ENCODE measurements at regions of chr18 and their contacts with region 1.

Region 1: DNA sequence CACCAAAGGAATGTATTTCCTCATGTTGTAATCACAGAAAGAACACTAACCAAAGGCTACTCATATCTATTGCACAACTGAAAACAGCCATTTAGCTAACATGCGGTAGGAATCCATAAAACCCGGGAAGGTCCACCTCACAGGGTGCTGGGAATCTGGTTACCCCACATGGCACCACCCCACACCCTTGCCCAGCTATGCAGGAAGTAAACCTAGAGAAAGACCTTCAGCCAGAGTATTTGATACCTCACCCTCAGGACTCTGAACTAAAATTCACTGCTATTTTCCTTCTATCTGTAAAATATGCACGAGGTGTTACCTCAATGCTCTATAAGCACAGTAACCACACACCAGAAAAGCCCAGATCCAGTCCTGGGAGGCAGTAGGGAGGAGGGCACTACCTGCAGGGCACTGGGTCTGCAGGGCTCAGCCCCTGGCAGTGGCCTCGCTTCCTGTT is 45.8 kb downstream of the PTPN2 start:
- DNase-seq: peak in 1 of 9 donors; percentile 28
- ATAC-seq: no peak
- H3K4me3 ChIP-seq: peak overlapping the region; percentile 15
- H3K4me3 Mint-ChIP-seq: peak overlapping the region; percentile 26 to 86 (median 54)
- H3K27ac ChIP-seq: no peak overlapping the region
- H3K27ac Mint-ChIP-seq: peak overlapping the region; percentile 28 to 98 (median 57)
- H3K4me1 ChIP-seq: peaks cover 31 to 34% of the 10 kb centered on the region in 2 donors
- H3K4me1 Mint-ChIP-seq: peaks cover 31 to 67% (median 57%) of the 10 kb centered on the region in 7 donors
- H3K27me3 ChIP-seq: no peaks in the 10 kb centered on the region
- H3K27me3 Mint-ChIP-seq: no peaks in the 10 kb centered on the region

Region 2: DNA sequence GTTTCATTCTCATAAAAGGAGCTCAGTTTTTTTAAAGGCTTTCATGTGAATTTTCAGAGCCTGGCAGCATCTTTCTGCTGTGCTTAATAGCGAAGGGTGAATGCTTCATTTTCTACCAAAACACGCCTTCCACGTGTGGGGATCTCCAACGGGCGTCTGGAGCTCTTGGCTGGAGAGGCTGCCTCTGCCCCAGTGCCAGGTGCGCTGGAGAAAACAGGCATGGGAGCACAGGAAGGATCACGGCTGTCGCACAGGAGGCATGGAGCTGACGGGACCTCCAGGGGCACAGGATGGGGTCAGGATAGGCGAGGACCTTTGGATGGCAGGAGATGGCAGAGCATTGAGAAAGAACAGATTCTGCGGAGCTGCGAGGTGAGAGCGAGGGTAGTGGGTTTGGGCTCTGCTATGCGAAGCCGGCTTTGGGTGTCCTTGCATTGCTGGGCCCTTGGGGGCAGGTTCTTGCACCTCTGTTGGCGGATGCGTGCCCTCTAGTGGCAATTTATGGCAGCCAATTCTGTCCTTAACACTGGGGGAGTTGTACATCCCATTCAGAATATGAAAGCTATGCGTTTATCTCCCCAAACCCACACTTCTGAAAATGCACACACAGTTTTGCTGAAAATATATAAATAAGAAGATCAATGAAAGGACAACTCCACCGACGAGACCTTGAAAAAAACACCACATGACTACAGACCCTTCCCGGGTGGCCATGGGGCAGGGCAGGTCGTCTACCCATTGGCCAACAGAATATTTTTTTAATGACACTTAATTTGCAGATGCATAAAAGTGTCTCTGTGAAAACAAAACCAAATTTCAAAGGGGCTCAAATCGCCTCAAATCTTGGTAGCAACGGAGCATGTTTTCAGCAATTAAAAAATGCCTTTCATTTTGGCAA is 1319.2 kb before region 1 on chr18:
- CTCF ChIA-PET with region 1: no interaction called
- POLR2A ChIA-PET with region 1: no interaction called
- intact Hi-C with region 1: no loop called
- DNase-seq: peak in 2 of 9 donors; percentile 11 to 27
- ATAC-seq: no peak
- H3K4me3 ChIP-seq: no peak overlapping the region
- H3K4me3 Mint-ChIP-seq: no peak overlapping the region
- H3K27ac ChIP-seq: no peak overlapping the region
- H3K27ac Mint-ChIP-seq: no peak overlapping the region
- H3K4me1 ChIP-seq: no peaks in the 10 kb centered on the region
- H3K4me1 Mint-ChIP-seq: no peaks in the 10 kb centered on the region
- H3K27me3 ChIP-seq: no peaks in the 10 kb centered on the region
- H3K27me3 Mint-ChIP-seq: peaks cover 0 to 20% (median 9%) of the 10 kb centered on the region in 5 donors

Region 3: GRCh38 chr18:12774982-12775381 is 63.2 kb before region 1 on chr18:
- CTCF ChIA-PET with region 1: no interaction called
- POLR2A ChIA-PET with region 1: no interaction called
- intact Hi-C with region 1: loop called in 1 of 2 experiments (anchors 2 kb)
- DNase-seq: no peak
- ATAC-seq: peak; percentile 52
- H3K4me3 ChIP-seq: peak overlapping the region; percentile 74
- H3K4me3 Mint-ChIP-seq: peak overlapping the region; percentile 81 to 90 (median 87)
- H3K27ac ChIP-seq: peak overlapping the region; percentile 64
- H3K27ac Mint-ChIP-seq: peak overlapping the region; percentile 16 to 95 (median 87)
- H3K4me1 ChIP-seq: peaks cover 0 to 6% of the 10 kb centered on the region in 2 donors
- H3K4me1 Mint-ChIP-seq: peaks cover 0 to 18% (median 16%) of the 10 kb centered on the region in 7 donors
- H3K27me3 ChIP-seq: no peaks in the 10 kb centered on the region
- H3K27me3 Mint-ChIP-seq: no peaks in the 10 kb centered on the region

Region 4: DNA sequence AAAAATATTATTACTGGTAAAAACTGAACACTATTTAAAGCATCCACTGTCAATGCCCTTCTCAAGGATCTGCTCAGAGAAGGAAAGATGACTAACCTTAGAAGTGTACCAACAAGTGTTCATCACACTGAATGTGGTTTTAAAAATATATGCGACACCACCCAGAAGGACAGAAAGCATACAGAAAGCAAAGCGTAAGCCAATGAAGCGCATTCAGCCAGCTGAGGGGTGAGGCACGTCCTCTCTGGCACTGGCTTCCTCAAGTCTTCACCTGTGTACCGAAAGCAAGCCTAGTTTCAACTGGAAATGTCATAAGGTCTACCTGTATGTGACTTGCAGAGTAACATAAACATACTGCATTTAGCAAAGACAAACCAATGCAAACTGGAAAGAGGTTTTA is 46.6 kb before region 1 on chr18:
- CTCF ChIA-PET with region 1: no interaction called
- POLR2A ChIA-PET with region 1: no interaction called
- intact Hi-C with region 1: loop called in 1 of 2 experiments (anchors 5 kb)
- DNase-seq: no peak
- ATAC-seq: no peak
- H3K4me3 ChIP-seq: no peak overlapping the region
- H3K4me3 Mint-ChIP-seq: no peak overlapping the region
- H3K27ac ChIP-seq: no peak overlapping the region
- H3K27ac Mint-ChIP-seq: peak overlapping the region in 3 of 9 donors; percentile 22 to 31 (median 23)
- H3K4me1 ChIP-seq: no peaks in the 10 kb centered on the region
- H3K4me1 Mint-ChIP-seq: peaks cover 0 to 17% (median 0%) of the 10 kb centered on the region in 7 donors
- H3K27me3 ChIP-seq: no peaks in the 10 kb centered on the region
- H3K27me3 Mint-ChIP-seq: no peaks in the 10 kb centered on the region

Region 5: DNA sequence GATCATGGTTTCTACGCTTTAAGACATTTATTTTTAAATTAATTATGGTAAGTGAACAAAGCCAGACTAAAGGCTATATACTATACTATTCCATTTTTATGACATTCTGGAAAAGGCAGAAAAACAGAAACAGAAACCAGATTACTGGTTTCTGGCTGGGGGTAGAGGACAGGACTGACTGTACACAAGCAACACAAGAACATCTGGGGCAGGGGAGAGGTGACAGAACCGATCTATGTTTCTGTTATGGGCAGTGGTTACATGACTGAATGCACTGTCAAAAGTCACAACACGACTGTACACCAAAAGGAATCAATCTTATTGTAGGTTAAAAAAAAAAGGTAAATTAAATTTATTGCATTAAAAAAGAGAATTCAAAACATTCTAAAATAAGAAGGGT is 18.9 kb before region 1 on chr18:
- CTCF ChIA-PET with region 1: no interaction called
- POLR2A ChIA-PET with region 1: interaction called, 3 read pairs
- intact Hi-C with region 1: loop called in 1 of 2 experiments (anchors 1 kb)
- DNase-seq: no peak
- ATAC-seq: no peak
- H3K4me3 ChIP-seq: no peak overlapping the region
- H3K4me3 Mint-ChIP-seq: peak overlapping the region in 1 of 10 donors; percentile 13
- H3K27ac ChIP-seq: no peak overlapping the region
- H3K27ac Mint-ChIP-seq: peak overlapping the region in 4 of 9 donors; percentile 14 to 56 (median 32)
- H3K4me1 ChIP-seq: no peaks in the 10 kb centered on the region
- H3K4me1 Mint-ChIP-seq: peaks cover 0 to 36% (median 4%) of the 10 kb centered on the region in 7 donors
- H3K27me3 ChIP-seq: no peaks in the 10 kb centered on the region
- H3K27me3 Mint-ChIP-seq: no peaks in the 10 kb centered on the region

Region 6: GRCh38 chr18:12857991-12858544 is 19.9 kb after region 1 on chr18:
- CTCF ChIA-PET with region 1: no interaction called
- POLR2A ChIA-PET with region 1: no interaction called
- intact Hi-C with region 1: loop called in 1 of 2 experiments (anchors 1 kb)
- DNase-seq: no peak
- ATAC-seq: no peak
- H3K4me3 ChIP-seq: no peak overlapping the region
- H3K4me3 Mint-ChIP-seq: peak overlapping the region in 3 of 10 donors; percentile 3 to 77 (median 3)
- H3K27ac ChIP-seq: no peak overlapping the region
- H3K27ac Mint-ChIP-seq: peak overlapping the region in 5 of 9 donors; percentile 14 to 82 (median 42)
- H3K4me1 ChIP-seq: peaks cover 3 to 14% of the 10 kb centered on the region in 2 donors
- H3K4me1 Mint-ChIP-seq: peaks cover 31 to 78% (median 75%) of the 10 kb centered on the region in 7 donors
- H3K27me3 ChIP-seq: no peaks in the 10 kb centered on the region
- H3K27me3 Mint-ChIP-seq: no peaks in the 10 kb centered on the region

Measured in naive thymus-derived CD4-positive, alpha-beta T cell (primary cell).